Heart right ventricle (tissue), 16 donors: ENCODE measurements at regions of chr9 and their contacts with region 1.

Region 1: DNA sequence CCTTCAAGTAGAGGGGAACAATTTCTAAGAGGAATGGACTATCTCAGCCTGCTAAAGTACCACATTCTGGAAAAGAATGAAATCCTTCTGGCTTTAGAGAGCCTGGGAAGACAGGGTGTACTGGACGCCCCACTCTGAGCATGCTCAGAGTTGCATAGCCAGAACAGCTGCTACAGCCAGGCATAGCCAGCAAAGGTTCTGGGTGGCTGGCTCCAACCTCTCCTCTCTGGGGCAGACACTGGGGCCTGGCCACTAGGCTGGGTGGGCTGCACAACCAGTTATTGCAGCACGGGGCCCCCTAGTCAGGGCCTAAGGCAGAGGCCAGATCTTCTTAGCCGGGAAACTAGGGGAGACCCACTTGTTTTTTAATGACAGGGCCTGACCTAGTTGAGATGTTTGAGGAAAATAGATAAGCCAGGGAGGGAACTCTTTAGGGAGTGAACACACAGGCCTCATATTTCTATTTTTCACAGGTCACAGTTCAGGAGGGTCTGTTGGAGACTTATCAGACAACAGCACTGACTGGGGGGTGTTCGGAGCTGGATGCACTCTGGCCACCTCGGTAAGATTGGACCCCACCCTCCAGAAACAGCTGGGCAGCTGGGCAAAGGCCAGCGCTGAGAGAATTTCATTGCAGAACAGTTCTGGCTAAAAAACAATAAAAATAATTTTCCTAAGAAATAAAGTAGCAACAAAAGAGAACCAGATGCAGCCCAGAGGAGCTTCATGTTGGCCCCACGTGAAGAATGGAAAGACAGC is 142.9 kb downstream of the LPAR1 start:
- DNase-seq: peak; percentile 53 to 67
- ATAC-seq: peak; percentile 82 to 95 (median 90)
- H3K4me3 ChIP-seq: no peak overlapping the region
- H3K27ac ChIP-seq: peak overlapping the region in 8 of 10 donors; percentile 23 to 69 (median 54)
- H3K4me1 ChIP-seq: peaks cover 0 to 14% (median 0%) of the 10 kb centered on the region in 9 donors
- H3K27me3 ChIP-seq: no peaks in the 10 kb centered on the region
- CTCF ChIP-seq: no peak

Region 2: GRCh38 chr9:110427497-110428104 is 467.7 kb before region 1 on chr9:
- intact Hi-C with region 1: no loop called
- DNase-seq: peak; percentile 10 to 35
- ATAC-seq: peak in 1 of 8 donors; percentile 10
- H3K4me3 ChIP-seq: no peak overlapping the region
- H3K27ac ChIP-seq: no peak overlapping the region
- H3K4me1 ChIP-seq: no peaks in the 10 kb centered on the region
- H3K27me3 ChIP-seq: no peaks in the 10 kb centered on the region
- CTCF ChIP-seq: peak in 6 of 9 donors; percentile 22 to 57 (median 38)

Region 3: GRCh38 chr9:110933350-110934001 is 38.1 kb after region 1 on chr9:
- intact Hi-C with region 1: no loop called
- DNase-seq: no peak
- ATAC-seq: no peak
- H3K4me3 ChIP-seq: no peak overlapping the region
- H3K27ac ChIP-seq: peak overlapping the region in 3 of 10 donors; percentile 3 to 44 (median 44)
- H3K4me1 ChIP-seq: peaks cover 0 to 13% (median 0%) of the 10 kb centered on the region in 9 donors
- H3K27me3 ChIP-seq: no peaks in the 10 kb centered on the region
- CTCF ChIP-seq: no peak

Region 4: GRCh38 chr9:111037381-111038305 is 142.3 kb after region 1 on chr9:
- intact Hi-C with region 1: loop called in 1 of 10 experiments (anchors 10 kb)
- DNase-seq: peak in 1 of 2 donors; percentile 34
- ATAC-seq: peak in 4 of 8 donors; percentile 25 to 41 (median 33)
- H3K4me3 ChIP-seq: peak overlapping the region; percentile 35 to 70 (median 56)
- H3K27ac ChIP-seq: peak overlapping the region; percentile 52 to 91 (median 78)
- H3K4me1 ChIP-seq: peaks cover 0 to 33% (median 6%) of the 10 kb centered on the region in 9 donors
- H3K27me3 ChIP-seq: peaks cover 4 to 65% (median 54%) of the 10 kb centered on the region in 7 donors
- CTCF ChIP-seq: peak in 1 of 9 donors; percentile 18

Region 5: DNA sequence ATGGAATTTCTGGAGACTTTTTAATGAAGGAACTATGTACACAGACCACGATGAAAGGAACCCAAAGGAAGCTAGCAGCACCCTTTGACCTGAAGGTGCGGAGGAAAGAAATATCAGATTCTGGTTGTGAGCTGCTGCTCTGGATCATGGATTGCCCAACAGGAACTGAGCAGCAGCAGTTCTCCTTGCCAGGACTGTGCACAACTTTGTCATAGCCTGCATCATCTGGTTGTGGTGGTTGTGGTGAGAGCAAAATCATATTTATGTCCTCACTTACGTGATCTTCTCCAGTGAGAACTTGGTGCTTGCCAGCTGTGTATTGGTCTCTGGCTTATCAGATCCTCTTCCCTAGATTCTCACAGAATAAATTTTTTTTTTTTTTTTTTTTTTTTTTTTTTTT is 213.6 kb after region 1 on chr9:
- intact Hi-C with region 1: no loop called
- DNase-seq: no peak
- ATAC-seq: no peak
- H3K4me3 ChIP-seq: no peak overlapping the region
- H3K27ac ChIP-seq: no peak overlapping the region
- H3K4me1 ChIP-seq: peaks cover 0 to 8% (median 0%) of the 10 kb centered on the region in 9 donors
- H3K27me3 ChIP-seq: no peaks in the 10 kb centered on the region
- CTCF ChIP-seq: no peak